ENCODE measurements at regions of chr7 and their contacts with region 1.

Region 1: GRCh38 chr7:104983578-104984539 is 30.1 kb upstream of the KMT2E start:
- DNase-seq: peak; percentile 80
- ATAC-seq: peak; percentile 89
- H3K4me3 Mint-ChIP-seq: peak overlapping the region; percentile 98
- H3K27ac Mint-ChIP-seq: peak overlapping the region; percentile 99
- H3K4me1 Mint-ChIP-seq: peaks cover 75% of the 10 kb centered on the region
- H3K27me3 Mint-ChIP-seq: no peaks in the 10 kb centered on the region
- CTCF ChIP-seq: no peak

Region 2: DNA sequence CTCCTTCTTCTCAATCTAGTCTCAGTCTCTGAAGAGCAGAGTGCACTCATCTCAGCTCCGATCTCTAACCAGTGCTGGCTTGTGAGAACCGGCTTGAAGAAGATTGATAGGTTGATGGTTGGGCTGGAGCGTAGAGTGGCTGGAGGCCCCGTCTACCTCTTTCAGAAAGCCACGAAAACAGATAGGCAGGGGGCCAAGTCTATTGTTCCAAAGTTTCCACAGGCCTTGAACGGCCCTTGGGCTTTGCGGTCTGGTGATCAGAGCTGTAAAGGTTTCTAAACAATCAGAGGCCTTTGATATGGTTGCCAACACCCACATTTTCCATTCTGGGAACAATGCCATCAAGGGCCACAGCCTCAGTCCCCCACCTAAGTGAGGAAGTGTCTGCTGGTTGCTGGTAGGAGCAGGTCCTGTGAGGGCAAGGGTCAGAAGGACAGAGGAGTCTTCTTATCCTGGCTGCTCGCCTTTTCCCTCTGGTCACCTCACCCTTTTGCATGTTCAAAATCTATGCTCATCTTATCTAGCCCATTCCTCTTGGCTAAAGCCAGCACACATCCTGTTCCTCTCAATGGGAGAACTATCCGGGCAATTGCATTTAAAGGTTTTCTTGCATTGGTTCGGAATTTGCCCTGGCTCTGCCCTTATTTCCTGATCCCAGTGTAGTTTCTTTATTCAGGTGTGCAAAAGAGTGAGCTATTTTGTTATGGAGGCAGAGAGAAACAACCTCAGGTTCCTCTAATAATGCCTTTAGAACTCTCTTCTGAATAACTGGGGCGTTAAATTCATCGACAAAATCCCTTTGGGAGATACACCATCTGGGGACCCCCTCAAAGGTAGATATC is 40.1 kb before region 1 on chr7:
- CTCF ChIA-PET with region 1: interaction called, 20 read pairs
- POLR2A ChIA-PET with region 1: interaction called, 193 read pairs
- intact Hi-C with region 1: loop called (anchors 1 kb)
- DNase-seq: peak; percentile 53
- ATAC-seq: peak; percentile 9
- H3K4me3 Mint-ChIP-seq: peak overlapping the region; percentile 98
- H3K27ac Mint-ChIP-seq: peak overlapping the region; percentile 100
- H3K4me1 Mint-ChIP-seq: peaks cover 83% of the 10 kb centered on the region
- H3K27me3 Mint-ChIP-seq: no peaks in the 10 kb centered on the region
- CTCF ChIP-seq: no peak

Region 3: GRCh38 chr7:105013221-105013815 is 29.5 kb after region 1 on chr7:
- CTCF ChIA-PET with region 1: interaction called, 67 read pairs
- POLR2A ChIA-PET with region 1: interaction called, 545 read pairs
- intact Hi-C with region 1: loop called (anchors 1 kb)
- DNase-seq: peak; percentile 91
- ATAC-seq: peak; percentile 57
- H3K4me3 Mint-ChIP-seq: peak overlapping the region; percentile 96
- H3K27ac Mint-ChIP-seq: peak overlapping the region; percentile 100
- H3K4me1 Mint-ChIP-seq: peaks cover 53% of the 10 kb centered on the region
- H3K27me3 Mint-ChIP-seq: no peaks in the 10 kb centered on the region
- CTCF ChIP-seq: no peak

Region 4: GRCh38 chr7:105036217-105037168 is 52.6 kb after region 1 on chr7:
- CTCF ChIA-PET with region 1: interaction called, 117 read pairs
- POLR2A ChIA-PET with region 1: interaction called, 7 read pairs
- intact Hi-C with region 1: no loop called
- DNase-seq: no peak
- ATAC-seq: no peak
- H3K4me3 Mint-ChIP-seq: peak overlapping the region; percentile 7
- H3K27ac Mint-ChIP-seq: no peak overlapping the region
- H3K4me1 Mint-ChIP-seq: peaks cover 54% of the 10 kb centered on the region
- H3K27me3 Mint-ChIP-seq: no peaks in the 10 kb centered on the region
- CTCF ChIP-seq: no peak

Region 5: DNA sequence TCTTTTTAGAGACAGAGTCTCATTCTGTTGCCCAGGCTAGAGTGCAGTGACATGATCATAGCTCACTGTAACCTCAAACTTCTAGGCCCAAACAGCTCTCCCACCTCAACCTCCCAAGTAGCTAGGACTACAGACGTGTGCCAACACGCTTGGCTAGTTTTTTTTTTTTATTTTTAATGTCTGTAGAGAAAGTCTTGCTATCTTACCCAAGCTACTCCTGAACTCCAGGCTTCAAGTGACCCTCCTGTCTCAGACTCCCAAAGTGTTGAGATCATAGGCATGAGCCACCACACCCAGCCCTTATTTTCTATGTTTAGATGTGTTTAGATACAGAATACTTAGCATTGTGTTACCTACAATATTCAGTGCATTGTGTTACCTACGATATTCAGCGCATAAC is 76.6 kb after region 1 on chr7:
- CTCF ChIA-PET with region 1: interaction called, 12 read pairs
- POLR2A ChIA-PET with region 1: interaction called, 3 read pairs
- intact Hi-C with region 1: loop called (anchors 2 kb)
- DNase-seq: no peak
- ATAC-seq: no peak
- H3K4me3 Mint-ChIP-seq: no peak overlapping the region
- H3K27ac Mint-ChIP-seq: no peak overlapping the region
- H3K4me1 Mint-ChIP-seq: peaks cover 40% of the 10 kb centered on the region
- H3K27me3 Mint-ChIP-seq: no peaks in the 10 kb centered on the region
- CTCF ChIP-seq: no peak

Region 6: GRCh38 chr7:105245398-105246114 is 261.7 kb after region 1 on chr7:
- CTCF ChIA-PET with region 1: no interaction called
- POLR2A ChIA-PET with region 1: no interaction called
- intact Hi-C with region 1: no loop called
- DNase-seq: no peak
- ATAC-seq: peak; percentile 25
- H3K4me3 Mint-ChIP-seq: no peak overlapping the region
- H3K27ac Mint-ChIP-seq: no peak overlapping the region
- H3K4me1 Mint-ChIP-seq: peaks cover 28% of the 10 kb centered on the region
- H3K27me3 Mint-ChIP-seq: no peaks in the 10 kb centered on the region
- CTCF ChIP-seq: no peak

Region 7: DNA sequence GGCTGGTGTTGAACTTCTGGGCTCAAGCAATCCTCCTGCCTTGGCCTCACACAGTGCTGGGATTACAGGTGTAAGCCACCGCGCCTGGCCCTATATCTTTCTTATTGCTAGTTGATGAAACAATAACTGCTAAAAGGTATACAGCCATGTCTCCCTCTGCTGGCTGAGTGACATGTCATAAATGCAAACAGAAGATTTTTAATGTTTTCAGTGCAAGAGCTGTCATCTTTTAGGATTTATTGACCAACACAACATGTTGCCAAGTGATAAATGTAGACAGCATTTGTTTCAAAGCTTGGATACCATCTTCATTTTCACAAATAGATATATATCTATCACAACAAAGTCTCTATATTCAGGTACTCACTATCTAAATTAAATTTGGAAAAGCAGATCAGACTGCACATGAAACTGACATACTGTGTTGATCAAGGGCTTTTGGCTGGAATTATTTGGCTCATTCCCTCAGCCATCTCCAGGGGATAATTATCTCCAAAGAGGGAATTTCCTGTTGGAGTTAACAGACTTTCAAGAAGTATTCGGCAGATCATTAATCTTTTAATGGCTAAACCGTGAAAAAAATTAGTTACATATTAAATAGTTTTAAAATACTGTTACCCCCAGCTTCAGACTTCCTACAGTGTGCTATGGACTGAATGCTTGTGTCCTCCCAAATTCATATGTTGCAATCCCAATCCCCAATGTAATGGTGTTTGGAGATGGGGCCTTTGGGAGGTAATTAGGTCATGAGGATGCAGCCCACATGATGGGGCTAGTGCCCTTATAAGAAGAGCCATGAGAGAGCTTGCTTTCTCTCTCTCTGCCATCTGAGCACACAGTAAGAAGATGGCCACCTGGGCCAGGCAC is 446.1 kb after region 1 on chr7:
- CTCF ChIA-PET with region 1: interaction called, 5 read pairs
- POLR2A ChIA-PET with region 1: no interaction called
- intact Hi-C with region 1: loop called (anchors 2 kb)
- DNase-seq: no peak
- ATAC-seq: peak; percentile 54
- H3K4me3 Mint-ChIP-seq: no peak overlapping the region
- H3K27ac Mint-ChIP-seq: no peak overlapping the region
- H3K4me1 Mint-ChIP-seq: peaks cover 3% of the 10 kb centered on the region
- H3K27me3 Mint-ChIP-seq: no peaks in the 10 kb centered on the region
- CTCF ChIP-seq: no peak

Region 8: GRCh38 chr7:105589356-105590077 is 605.7 kb after region 1 on chr7:
- CTCF ChIA-PET with region 1: interaction called, 4 read pairs
- POLR2A ChIA-PET with region 1: no interaction called
- intact Hi-C with region 1: loop called (anchors 2 kb)
- DNase-seq: no peak
- ATAC-seq: peak; percentile 89
- H3K4me3 Mint-ChIP-seq: no peak overlapping the region
- H3K27ac Mint-ChIP-seq: peak overlapping the region; percentile 27
- H3K4me1 Mint-ChIP-seq: peaks cover 38% of the 10 kb centered on the region
- H3K27me3 Mint-ChIP-seq: no peaks in the 10 kb centered on the region
- CTCF ChIP-seq: no peak